Activated B cell treated with CpG ODN at 0.5 μM for 24 hours (primary cell): ENCODE measurements at regions of chr15 and their contacts with region 1.

Region 1: GRCh38 chr15:64865998-64866520 is 24.3 kb downstream of the PLEKHO2 start:
- DNase-seq: no peak
- ATAC-seq: no peak
- H3K4me3 Mint-ChIP-seq: no peak overlapping the region
- H3K27ac Mint-ChIP-seq: no peak overlapping the region
- H3K4me1 Mint-ChIP-seq: peaks cover 44% of the 10 kb centered on the region
- H3K27me3 Mint-ChIP-seq: no peaks in the 10 kb centered on the region
- CTCF ChIP-seq: no peak

Region 2: DNA sequence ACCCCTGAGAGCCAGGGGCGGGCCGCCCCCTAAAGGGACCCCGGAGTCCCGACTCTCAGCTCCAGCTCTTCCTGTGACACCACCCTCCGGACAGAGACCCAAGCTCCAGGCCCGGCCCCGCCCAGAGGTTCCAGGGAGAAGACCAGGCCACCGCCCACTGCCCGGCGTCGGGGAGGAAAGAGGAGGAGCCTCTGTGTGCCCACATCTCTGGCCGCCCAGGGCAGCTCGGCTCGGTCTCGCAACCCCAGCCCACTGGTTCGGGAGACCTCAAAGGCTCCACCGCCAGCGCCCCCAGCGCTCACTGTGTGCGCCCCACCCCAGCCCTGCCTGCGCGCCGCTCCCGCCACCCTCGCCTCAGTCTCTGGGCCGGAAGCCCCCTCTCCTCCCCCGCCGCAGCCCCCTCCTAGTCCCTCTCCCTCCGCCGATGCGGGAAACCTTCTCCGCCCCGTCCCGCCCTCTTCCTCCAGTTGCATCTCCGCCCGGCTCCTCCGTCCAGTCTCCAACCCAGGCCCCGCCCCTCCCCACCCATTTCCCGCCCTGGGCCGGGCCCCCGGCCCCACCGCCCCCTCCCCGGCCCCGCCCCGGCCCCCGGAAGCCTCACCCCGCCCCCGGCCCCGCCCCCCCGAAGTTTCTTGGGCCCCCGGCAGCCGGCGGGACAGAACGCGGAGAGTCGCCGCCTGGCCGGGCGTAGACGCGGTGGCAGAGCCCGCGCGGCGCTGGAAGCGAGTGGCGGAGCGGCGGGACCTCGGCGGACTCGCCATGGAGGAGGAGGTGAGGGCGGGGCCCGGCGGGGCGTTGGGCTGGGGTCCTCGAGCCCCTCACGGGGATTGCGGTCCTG is 24.6 kb before region 1 on chr15 and contains the start of gene PLEKHO2:
- CTCF ChIA-PET with region 1: no interaction called
- POLR2A ChIA-PET with region 1: no interaction called
- intact Hi-C with region 1: loop called (anchors 2 kb)
- DNase-seq: peak; percentile 78
- ATAC-seq: peak; percentile 75
- H3K4me3 Mint-ChIP-seq: peak within 1 kb of the TSS; percentile 95
- H3K27ac Mint-ChIP-seq: peak within 1 kb of the TSS; percentile 75
- H3K4me1 Mint-ChIP-seq: peaks cover 53% of the 10 kb centered on the region
- H3K27me3 Mint-ChIP-seq: no peaks in the 10 kb centered on the region
- CTCF ChIP-seq: no peak
- total RNA-seq, gene PLEKHO2: 36.5 and 38.1 TPM in 2 replicates

Region 3: DNA sequence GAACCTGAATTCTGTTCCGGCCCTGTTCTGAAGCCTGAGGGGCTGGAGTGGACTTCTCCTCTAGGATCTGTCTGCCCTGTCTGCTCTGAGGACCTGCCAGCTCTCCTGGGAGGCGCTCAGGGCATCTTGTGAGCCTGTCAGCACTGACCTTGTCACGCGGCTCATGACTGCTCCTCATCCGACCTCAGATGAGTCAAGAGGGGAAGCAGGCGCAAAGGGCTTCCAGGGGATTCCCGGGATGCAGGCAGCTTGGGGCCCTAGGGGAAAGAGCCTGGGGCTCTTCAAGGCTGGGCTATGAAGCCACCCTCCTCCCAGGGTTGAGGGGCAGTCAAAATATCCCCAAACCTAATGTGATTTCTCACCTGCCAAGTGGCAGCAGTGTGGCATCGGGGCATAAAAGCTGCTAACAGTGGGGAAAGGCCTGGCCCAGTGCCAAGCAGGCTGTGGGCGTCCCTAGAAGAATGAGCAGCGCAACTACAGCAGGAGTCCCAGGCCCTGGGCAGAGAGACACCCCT is 18.0 kb after region 1 on chr15:
- CTCF ChIA-PET with region 1: no interaction called
- POLR2A ChIA-PET with region 1: interaction called, 19 read pairs
- intact Hi-C with region 1: loop called (anchors 2 kb)
- DNase-seq: peak; percentile 45
- ATAC-seq: peak; percentile 78
- H3K4me3 Mint-ChIP-seq: peak overlapping the region; percentile 62
- H3K27ac Mint-ChIP-seq: peak overlapping the region; percentile 87
- H3K4me1 Mint-ChIP-seq: peaks cover 31% of the 10 kb centered on the region
- H3K27me3 Mint-ChIP-seq: no peaks in the 10 kb centered on the region
- CTCF ChIP-seq: no peak